HepG2 (cell line): ENCODE measurements at regions of chr5 and their contacts with region 1.

Region 1: DNA sequence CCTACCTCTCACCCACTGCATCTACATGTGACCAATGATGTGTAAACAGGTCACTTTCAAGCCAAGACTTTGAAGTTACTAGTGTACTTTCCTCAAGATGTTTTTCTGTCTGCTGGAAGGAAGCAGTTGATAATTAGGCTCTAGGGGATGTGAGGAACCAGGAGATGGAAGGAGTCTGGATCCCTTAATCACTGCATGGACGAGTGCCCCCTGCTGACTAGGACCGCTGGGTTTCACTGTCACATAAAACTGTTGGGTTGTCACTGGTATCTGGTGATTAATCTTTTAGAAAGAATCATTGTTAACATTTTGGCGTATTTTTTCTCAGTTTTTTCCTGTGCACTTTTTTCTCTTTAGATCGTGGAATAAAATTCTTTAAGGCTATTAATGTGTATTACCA is 79.5 kb downstream of the SREK1 start:
- DNase-seq: no peak
- ATAC-seq: peak; percentile 54; the same call in 1 of the 3 replicates
- H3K4me3 ChIP-seq: no peak overlapping the region
- H3K27ac ChIP-seq: no peak overlapping the region
- H3K4me1 ChIP-seq: 0 out of 2 replicates have a peak, but pooled peaks cover 10% of the 10 kb centered on the region
- H3K27me3 ChIP-seq: no peaks in the 10 kb centered on the region
- CTCF ChIP-seq: peak; percentile 61
- EP300 ChIP-seq: no peak
- POLR2A ChIP-seq: no peak
- RAD21 ChIP-seq: no peak

Region 2: GRCh38 chr5:65742565-65743231 is 480.9 kb before region 1 on chr5:
- CTCF ChIA-PET with region 1: no interaction called
- POLR2A ChIA-PET with region 1: no interaction called
- in situ Hi-C with region 1: no loop called
- intact Hi-C with region 1: loop called (anchors 5 kb)
- DNase-seq: peak; percentile 40
- ATAC-seq: peak; percentile 66
- H3K4me3 ChIP-seq: no peak overlapping the region
- H3K27ac ChIP-seq: no peak overlapping the region
- H3K4me1 ChIP-seq: no peaks in the 10 kb centered on the region
- H3K27me3 ChIP-seq: no peaks in the 10 kb centered on the region
- CTCF ChIP-seq: peak; percentile 65
- EP300 ChIP-seq: no peak
- POLR2A ChIP-seq: no peak
- RAD21 ChIP-seq: peak; percentile 50

Region 3: GRCh38 chr5:65880496-65881072 is 343.1 kb before region 1 on chr5:
- CTCF ChIA-PET with region 1: no interaction called
- POLR2A ChIA-PET with region 1: no interaction called
- in situ Hi-C with region 1: no loop called
- intact Hi-C with region 1: no loop called
- DNase-seq: no peak
- ATAC-seq: no peak
- H3K4me3 ChIP-seq: no peak overlapping the region
- H3K27ac ChIP-seq: no peak overlapping the region
- H3K4me1 ChIP-seq: no peaks in the 10 kb centered on the region
- H3K27me3 ChIP-seq: peaks cover 0 to 12% of the 10 kb centered on the region in 2 experiments; a peak in 1 of 5 replicates
- CTCF ChIP-seq: no peak
- EP300 ChIP-seq: no peak
- POLR2A ChIP-seq: no peak
- RAD21 ChIP-seq: no peak

Region 4: DNA sequence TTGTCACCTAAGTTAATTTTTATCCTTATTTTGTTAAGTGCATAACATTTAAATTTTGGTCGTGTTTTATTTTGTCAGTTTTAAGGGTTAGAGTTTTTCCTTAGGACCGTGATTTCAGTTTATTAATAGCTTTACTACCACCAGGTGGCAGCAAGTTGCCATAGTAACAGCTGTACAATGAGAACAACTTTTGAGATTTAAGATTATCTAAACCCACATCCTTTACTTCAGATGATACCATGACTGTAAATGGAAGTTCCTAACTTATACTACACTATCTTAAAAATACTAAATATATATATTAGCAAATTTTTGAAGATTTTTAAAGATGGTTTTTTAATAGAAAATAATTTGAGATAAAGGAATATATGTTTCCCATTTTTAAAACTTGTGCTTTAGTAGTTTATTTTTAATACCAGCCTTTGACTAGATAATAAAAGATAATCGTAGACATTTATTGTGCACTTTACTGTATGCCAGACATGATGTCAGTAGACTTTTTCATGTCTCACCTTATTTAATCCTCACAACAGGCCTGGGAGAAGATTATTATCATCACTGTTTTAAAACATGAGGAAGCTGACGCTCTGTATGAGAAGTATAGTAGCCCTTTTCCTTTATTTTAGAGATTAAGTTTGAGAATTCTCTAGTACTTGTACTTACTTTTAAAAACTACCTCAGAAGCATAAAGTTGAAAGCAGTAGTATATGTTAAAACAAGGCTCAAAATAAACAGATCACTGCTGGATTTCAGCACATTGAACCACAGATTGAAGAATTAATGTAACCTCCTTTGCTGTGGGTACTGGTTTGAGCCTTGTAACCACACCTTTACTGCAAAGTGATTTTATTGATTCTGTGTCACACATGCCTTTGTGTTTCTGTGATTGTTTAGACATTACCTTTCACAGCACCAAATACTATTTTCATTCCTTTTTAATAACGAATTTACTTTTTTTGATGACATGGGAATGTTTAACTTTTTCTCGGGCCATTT is 52.0 kb before region 1 on chr5:
- CTCF ChIA-PET with region 1: no interaction called
- POLR2A ChIA-PET with region 1: no interaction called
- in situ Hi-C with region 1: no loop called
- intact Hi-C with region 1: loop called (anchors 1 kb)
- DNase-seq: peak; percentile 32
- ATAC-seq: peak; percentile 41; the same call in 1 of the 3 replicates
- H3K4me3 ChIP-seq: no peak overlapping the region
- H3K27ac ChIP-seq: no peak overlapping the region
- H3K4me1 ChIP-seq: no peaks in the 10 kb centered on the region
- H3K27me3 ChIP-seq: no peaks in the 10 kb centered on the region
- CTCF ChIP-seq: peak; percentile 56
- EP300 ChIP-seq: no peak
- POLR2A ChIP-seq: no peak
- RAD21 ChIP-seq: no peak